K562 (cell line): ENCODE measurements at regions of chr6 and their contacts with region 1.

Region 1: DNA sequence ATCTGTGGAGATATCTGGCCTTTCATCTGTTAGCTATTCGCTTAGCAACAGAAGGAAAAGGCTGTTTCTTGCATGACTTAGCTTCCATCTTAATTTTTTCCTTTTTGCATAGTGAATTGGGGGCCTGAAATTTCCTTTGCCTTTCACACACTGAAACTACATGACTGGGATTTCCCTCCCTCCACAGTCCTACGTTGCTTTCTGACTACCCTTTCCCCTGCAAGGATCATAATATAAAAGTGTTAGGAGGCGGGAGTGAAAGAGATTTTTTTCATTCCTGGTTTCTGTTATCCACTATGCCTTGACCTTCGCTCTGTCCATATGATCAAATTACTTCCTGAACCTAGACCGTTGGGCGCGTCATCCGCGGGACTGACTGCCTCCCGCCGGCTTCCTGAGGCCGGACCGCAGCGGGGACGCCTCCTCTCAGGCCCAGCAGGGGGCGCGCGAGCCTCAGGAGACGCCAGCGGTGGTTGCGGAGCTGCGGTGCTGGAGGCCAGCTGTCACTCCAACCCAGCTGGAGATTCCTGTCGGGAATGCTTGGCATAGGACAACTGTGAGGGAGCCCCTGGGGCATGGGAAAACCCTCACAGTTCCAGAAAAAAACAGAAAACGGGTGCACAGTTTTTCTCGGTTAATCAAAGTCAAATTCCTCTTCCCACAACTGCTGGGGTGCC is 55.6 kb downstream of the MEP1A start:
- DNase-seq: peak; percentile 75 to 87 (median 80)
- ATAC-seq: peak; percentile 100
- H3K4me3 ChIP-seq: no peak overlapping the region
- H3K27ac ChIP-seq: no peak overlapping the region
- H3K4me1 ChIP-seq: peaks cover 0 to 5% of the 10 kb centered on the region in 2 experiments; a peak in 2 of 5 replicates
- H3K27me3 ChIP-seq: peaks cover 0 to 5% of the 10 kb centered on the region in 2 experiments; a peak in 1 of 5 replicates
- CTCF ChIP-seq: peak; percentile 92 to 96 (median 93)
- EP300 ChIP-seq: no peak
- POLR2A ChIP-seq: no peak
- RAD21 ChIP-seq: peak; percentile 77 to 88

Region 2: GRCh38 chr6:46832816-46833215 is 16.0 kb before region 1 on chr6:
- CTCF ChIA-PET with region 1: no interaction called
- POLR2A ChIA-PET with region 1: no interaction called
- in situ Hi-C with region 1: no loop called
- intact Hi-C with region 1: no loop called
- DNase-seq: no peak
- ATAC-seq: no peak
- H3K4me3 ChIP-seq: no peak overlapping the region
- H3K27ac ChIP-seq: no peak overlapping the region
- H3K4me1 ChIP-seq: no peaks in the 10 kb centered on the region
- H3K27me3 ChIP-seq: peaks cover 0 to 7% of the 10 kb centered on the region in 2 experiments; a peak in 1 of 5 replicates
- CTCF ChIP-seq: no peak
- EP300 ChIP-seq: no peak
- POLR2A ChIP-seq: no peak
- RAD21 ChIP-seq: no peak

Region 3: GRCh38 chr6:46993846-46994245 is 145.0 kb after region 1 on chr6:
- CTCF ChIA-PET with region 1: interaction called, 5 read pairs
- POLR2A ChIA-PET with region 1: no interaction called
- in situ Hi-C with region 1: no loop called
- intact Hi-C with region 1: loop called (anchors 1 kb)
- DNase-seq: no peak
- ATAC-seq: no peak
- H3K4me3 ChIP-seq: no peak overlapping the region
- H3K27ac ChIP-seq: no peak overlapping the region
- H3K4me1 ChIP-seq: no peaks in the 10 kb centered on the region
- H3K27me3 ChIP-seq: no peaks in the 10 kb centered on the region
- CTCF ChIP-seq: no peak
- EP300 ChIP-seq: no peak
- POLR2A ChIP-seq: no peak
- RAD21 ChIP-seq: no peak

Region 4: GRCh38 chr6:47047479-47048407 is 198.9 kb after region 1 on chr6:
- CTCF ChIA-PET with region 1: interaction called, 4 read pairs
- POLR2A ChIA-PET with region 1: interaction called, 3 read pairs
- in situ Hi-C with region 1: loop called (anchors 10 kb)
- intact Hi-C with region 1: loop called (anchors 1 kb)
- DNase-seq: peak; percentile 27 to 72 (median 39)
- ATAC-seq: peak; percentile 99
- H3K4me3 ChIP-seq: no peak overlapping the region
- H3K27ac ChIP-seq: no peak overlapping the region
- H3K4me1 ChIP-seq: no peaks in the 10 kb centered on the region
- H3K27me3 ChIP-seq: no peaks in the 10 kb centered on the region
- CTCF ChIP-seq: peak; percentile 74 to 90 (median 84)
- EP300 ChIP-seq: no peak
- POLR2A ChIP-seq: no peak
- RAD21 ChIP-seq: peak; percentile 70 to 85

Region 5: DNA sequence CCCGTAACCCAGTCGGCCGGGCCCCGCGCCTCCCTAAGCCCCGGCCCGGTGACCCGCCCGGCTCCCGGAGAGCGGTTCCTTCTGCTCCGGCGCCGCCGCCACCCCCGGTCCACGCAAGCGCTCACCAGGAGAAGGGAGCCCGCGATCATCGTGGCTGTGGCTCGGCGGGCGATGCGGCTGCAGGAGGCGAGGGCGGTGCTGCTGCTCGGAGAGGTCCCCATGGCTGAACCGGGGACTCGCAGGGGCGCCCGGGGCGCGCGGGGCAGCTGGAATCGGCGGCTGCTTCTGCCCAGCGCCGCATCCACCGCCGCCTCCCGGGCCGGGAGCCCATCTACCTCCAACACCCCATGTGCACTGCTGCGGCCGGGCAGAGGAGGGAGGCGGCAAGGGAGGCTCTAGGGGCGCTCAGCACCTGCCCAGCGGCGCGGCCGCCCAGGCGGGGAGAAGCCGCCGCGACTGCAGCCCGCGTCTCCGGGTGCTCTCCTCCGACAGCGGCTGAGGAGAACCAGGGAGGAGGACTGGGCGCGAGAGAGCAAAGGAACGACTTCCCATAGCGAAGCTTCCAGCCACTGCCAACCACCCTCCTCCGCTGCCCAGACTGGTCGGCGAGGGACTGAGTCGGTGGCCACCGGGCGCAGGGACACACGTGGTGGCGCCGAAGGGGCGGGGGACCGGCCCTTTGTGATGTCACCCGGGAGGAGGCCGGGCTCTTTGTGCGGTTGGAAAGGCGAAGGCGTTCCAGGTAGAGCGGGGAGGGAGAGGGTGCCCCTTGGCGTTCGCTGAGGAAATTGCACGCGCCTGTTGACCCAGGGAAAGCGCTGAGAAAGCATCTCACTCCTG is 460.7 kb after region 1 on chr6 and contains the start of gene TNFRSF21:
- CTCF ChIA-PET with region 1: no interaction called
- POLR2A ChIA-PET with region 1: no interaction called
- in situ Hi-C with region 1: loop called (anchors 10 kb)
- intact Hi-C with region 1: loop called (anchors 2 kb)
- DNase-seq: peak; percentile 95 to 97 (median 96)
- ATAC-seq: peak; percentile 99
- H3K4me3 ChIP-seq: peak within 1 kb of the TSS; percentile 61
- H3K27ac ChIP-seq: no peak within 1 kb of the TSS
- H3K4me1 ChIP-seq: peaks cover 0 to 15% of the 10 kb centered on the region in 2 experiments; a peak in 3 of 5 replicates
- H3K27me3 ChIP-seq: peaks cover 11 to 15% of the 10 kb centered on the region in 2 experiments
- CTCF ChIP-seq: peak; percentile 96 to 99 (median 99)
- EP300 ChIP-seq: peak; percentile 27
- POLR2A ChIP-seq: peak; percentile 63
- RAD21 ChIP-seq: peak; percentile 99
- polyA plus RNA-seq, gene TNFRSF21: 0.63 to 0.67 TPM